Activated CD8-positive, alpha-beta memory T cell treated with anti-CD3 and anti-CD28 coated beads, Interleukin-2, amount 10 ng/mL, durations not matched to agents 7 days and 5 days (primary cell): ENCODE measurements at regions of chr12 and their contacts with region 1.

Region 1: DNA sequence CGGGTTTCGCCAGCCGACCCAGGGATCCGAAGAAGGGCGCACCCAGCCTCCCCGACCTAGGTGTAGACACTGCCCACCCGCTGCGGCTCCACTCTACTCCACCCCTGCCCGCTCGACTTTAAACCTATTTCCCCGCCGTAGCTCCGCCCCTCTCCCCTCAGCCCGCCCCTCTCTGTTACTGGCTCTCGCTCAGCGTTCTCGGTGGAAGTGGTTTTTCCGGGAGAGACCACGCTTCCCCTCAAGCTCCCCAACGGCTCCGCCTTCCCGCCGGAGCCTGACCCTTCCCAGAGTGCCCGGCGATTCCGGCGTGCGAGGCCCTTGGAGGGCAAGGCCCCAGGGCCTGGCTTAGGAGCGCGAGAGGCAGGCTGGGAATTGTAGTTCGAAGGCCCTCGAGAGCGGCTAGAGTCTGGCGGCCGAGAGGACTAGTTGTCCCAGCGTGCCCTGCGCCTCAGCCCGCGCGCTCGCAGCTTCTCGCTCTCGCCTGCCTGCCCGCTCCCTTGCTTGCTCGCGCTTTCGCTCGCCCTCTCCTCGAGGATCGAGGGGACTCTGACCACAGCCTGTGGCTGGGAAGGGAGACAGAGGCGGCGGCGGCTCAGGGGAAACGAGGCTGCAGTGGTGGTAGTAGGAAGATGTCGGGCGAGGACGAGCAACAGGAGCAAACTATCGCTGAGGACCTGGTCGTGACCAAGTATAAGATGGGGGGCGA is at the start of gene PA2G4:
- DNase-seq: peak; percentile 100
- ATAC-seq: peak; percentile 92
- H3K4me3 Mint-ChIP-seq: peak within 1 kb of the TSS; percentile 99
- H3K27ac Mint-ChIP-seq: peak within 1 kb of the TSS; percentile 98
- H3K4me1 Mint-ChIP-seq: peaks cover 44% of the 10 kb centered on the region
- H3K27me3 Mint-ChIP-seq: no peaks in the 10 kb centered on the region
- total RNA-seq, gene PA2G4: 293 to 364 TPM

Region 2: GRCh38 chr12:55572168-55572567 is 532.1 kb before region 1 on chr12 and contains the start of gene OR2AP1:
- CTCF ChIA-PET with region 1: no interaction called
- DNase-seq: no peak
- ATAC-seq: no peak
- H3K4me3 Mint-ChIP-seq: no peak within 1 kb of the TSS
- H3K27ac Mint-ChIP-seq: no peak within 1 kb of the TSS
- H3K4me1 Mint-ChIP-seq: no peaks in the 10 kb centered on the region
- H3K27me3 Mint-ChIP-seq: no peaks in the 10 kb centered on the region
- total RNA-seq, gene OR2AP1: not detected

Region 3: GRCh38 chr12:55765736-55766290 is 338.4 kb before region 1 on chr12:
- CTCF ChIA-PET with region 1: no interaction called
- DNase-seq: no peak
- ATAC-seq: no peak
- H3K4me3 Mint-ChIP-seq: no peak overlapping the region
- H3K27ac Mint-ChIP-seq: no peak overlapping the region
- H3K4me1 Mint-ChIP-seq: peaks cover 5% of the 10 kb centered on the region
- H3K27me3 Mint-ChIP-seq: no peaks in the 10 kb centered on the region

Region 4: GRCh38 chr12:56041552-56042429 is 62.5 kb before region 1 on chr12 and contains the start of gene RPS26:
- CTCF ChIA-PET with region 1: interaction called, 45 read pairs
- DNase-seq: peak; percentile 97
- ATAC-seq: peak; percentile 91
- H3K4me3 Mint-ChIP-seq: peak within 1 kb of the TSS; percentile 93
- H3K27ac Mint-ChIP-seq: peak within 1 kb of the TSS; percentile 97
- H3K4me1 Mint-ChIP-seq: peaks cover 53% of the 10 kb centered on the region
- H3K27me3 Mint-ChIP-seq: no peaks in the 10 kb centered on the region
- total RNA-seq, gene RPS26: 27.9 to 42.2 TPM

Region 5: GRCh38 chr12:56078990-56079664 is 25.1 kb before region 1 on chr12:
- CTCF ChIA-PET with region 1: interaction called, 97 read pairs
- DNase-seq: peak; percentile 65
- ATAC-seq: peak; percentile 74
- H3K4me3 Mint-ChIP-seq: peak overlapping the region; percentile 76
- H3K27ac Mint-ChIP-seq: no peak overlapping the region
- H3K4me1 Mint-ChIP-seq: peaks cover 14% of the 10 kb centered on the region
- H3K27me3 Mint-ChIP-seq: peaks cover 30% of the 10 kb centered on the region

Region 6: GRCh38 chr12:56084958-56085543 is 19.2 kb before region 1 on chr12:
- CTCF ChIA-PET with region 1: interaction called, 97 read pairs
- DNase-seq: peak; percentile 67
- ATAC-seq: peak; percentile 64
- H3K4me3 Mint-ChIP-seq: no peak overlapping the region
- H3K27ac Mint-ChIP-seq: no peak overlapping the region
- H3K4me1 Mint-ChIP-seq: peaks cover 8% of the 10 kb centered on the region
- H3K27me3 Mint-ChIP-seq: peaks cover 25% of the 10 kb centered on the region

Region 7: GRCh38 chr12:56127888-56128669 is 23.8 kb after region 1 on chr12 and contains the start of gene ESYT1:
- CTCF ChIA-PET with region 1: interaction called, 11 read pairs
- DNase-seq: peak; percentile 100
- ATAC-seq: peak; percentile 91
- H3K4me3 Mint-ChIP-seq: peak within 1 kb of the TSS; percentile 98
- H3K27ac Mint-ChIP-seq: peak within 1 kb of the TSS; percentile 93
- H3K4me1 Mint-ChIP-seq: peaks cover 66% of the 10 kb centered on the region
- H3K27me3 Mint-ChIP-seq: no peaks in the 10 kb centered on the region
- total RNA-seq, gene ESYT1: 225 to 241 TPM